ENCODE measurements at regions of chr5 and their contacts with region 1.

Region 1: GRCh38 chr5:43040287-43041098 is at the start of gene ANXA2R:
- DNase-seq: peak; percentile 78
- ATAC-seq: peak; percentile 62
- H3K4me3 Mint-ChIP-seq: peak within 1 kb of the TSS; percentile 96
- H3K27ac Mint-ChIP-seq: peak within 1 kb of the TSS; percentile 98
- H3K4me1 Mint-ChIP-seq: peaks cover 53% of the 10 kb centered on the region
- H3K27me3 Mint-ChIP-seq: no peaks in the 10 kb centered on the region
- CTCF ChIP-seq: peak; percentile 39
- total RNA-seq, gene ANXA2R: 6.7 and 7.9 TPM in 2 replicates

Region 2: GRCh38 chr5:42908509-42909488 is 131.7 kb before region 1 on chr5:
- CTCF ChIA-PET with region 1: interaction called, 30 read pairs
- POLR2A ChIA-PET with region 1: interaction called, 30 read pairs
- intact Hi-C with region 1: loop called (anchors 1 kb)
- DNase-seq: peak; percentile 71
- ATAC-seq: peak; percentile 94
- H3K4me3 Mint-ChIP-seq: peak overlapping the region; percentile 93
- H3K27ac Mint-ChIP-seq: peak overlapping the region; percentile 84
- H3K4me1 Mint-ChIP-seq: peaks cover 12% of the 10 kb centered on the region
- H3K27me3 Mint-ChIP-seq: peaks cover 11% of the 10 kb centered on the region
- CTCF ChIP-seq: peak; percentile 50

Region 3: GRCh38 chr5:42994246-42995151 is 46.0 kb before region 1 on chr5:
- CTCF ChIA-PET with region 1: interaction called, 81 read pairs
- POLR2A ChIA-PET with region 1: interaction called, 372 read pairs
- intact Hi-C with region 1: loop called (anchors 1 kb)
- DNase-seq: peak; percentile 72
- ATAC-seq: peak; percentile 66
- H3K4me3 Mint-ChIP-seq: peak overlapping the region; percentile 99
- H3K27ac Mint-ChIP-seq: peak overlapping the region; percentile 100
- H3K4me1 Mint-ChIP-seq: peaks cover 34% of the 10 kb centered on the region
- H3K27me3 Mint-ChIP-seq: peaks cover under 1% of the 10 kb centered on the region
- CTCF ChIP-seq: peak; percentile 89

Region 4: GRCh38 chr5:43019614-43020293 is 20.7 kb before region 1 on chr5:
- CTCF ChIA-PET with region 1: interaction called, 89 read pairs
- POLR2A ChIA-PET with region 1: interaction called, 475 read pairs
- intact Hi-C with region 1: loop called (anchors 1 kb)
- DNase-seq: peak; percentile 61
- ATAC-seq: peak; percentile 64
- H3K4me3 Mint-ChIP-seq: peak overlapping the region; percentile 97
- H3K27ac Mint-ChIP-seq: peak overlapping the region; percentile 100
- H3K4me1 Mint-ChIP-seq: peaks cover 39% of the 10 kb centered on the region
- H3K27me3 Mint-ChIP-seq: no peaks in the 10 kb centered on the region
- CTCF ChIP-seq: no peak

Region 5: DNA sequence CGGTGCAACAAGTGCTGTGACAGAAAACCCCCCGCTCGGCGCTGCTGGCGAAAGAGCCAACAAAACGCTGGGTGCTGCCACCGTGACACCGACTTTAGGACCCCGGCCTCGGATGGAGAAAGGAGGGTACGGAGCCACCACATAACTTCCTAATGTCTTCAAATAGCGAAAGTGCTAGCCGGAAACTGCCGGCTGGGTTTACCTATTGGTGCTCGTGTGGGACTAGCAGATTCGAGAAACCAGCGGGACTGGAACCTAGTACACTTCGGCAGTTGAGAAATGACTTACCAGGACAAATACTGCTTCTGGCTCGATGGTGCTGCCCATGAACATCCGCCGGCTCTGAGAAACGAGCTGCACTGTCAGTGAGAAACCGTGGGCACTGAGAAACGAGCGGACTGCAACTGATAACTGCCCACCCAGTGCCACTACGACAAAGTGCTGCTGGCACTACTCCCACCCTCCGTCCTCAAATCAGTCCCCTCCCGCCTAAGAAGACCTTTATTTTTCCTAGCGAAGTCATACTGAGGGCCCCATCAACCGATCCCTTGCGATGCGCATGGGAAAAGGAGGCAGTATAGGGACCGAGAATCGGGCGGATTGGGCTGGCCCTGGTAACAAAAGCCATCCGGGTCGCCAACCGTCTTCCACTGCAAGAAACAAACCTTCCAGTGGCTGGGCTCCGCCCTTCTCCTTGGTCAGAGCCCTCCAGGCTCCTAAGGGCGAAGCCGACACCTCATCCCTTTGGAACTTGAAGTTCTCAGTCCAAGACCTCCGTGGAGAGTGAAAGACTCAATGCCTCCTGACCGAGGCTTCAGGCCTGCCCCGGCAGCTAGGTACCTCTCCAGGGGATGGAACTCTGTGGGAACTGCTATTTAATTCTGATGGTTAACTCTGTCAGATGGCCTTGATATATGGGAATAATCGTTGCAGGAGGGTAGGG is 26.6 kb after region 1 on chr5:
- CTCF ChIA-PET with region 1: interaction called, 44 read pairs
- POLR2A ChIA-PET with region 1: interaction called, 207 read pairs
- intact Hi-C with region 1: loop called (anchors 1 kb)
- DNase-seq: peak; percentile 83
- ATAC-seq: peak; percentile 55
- H3K4me3 Mint-ChIP-seq: peak overlapping the region; percentile 95
- H3K27ac Mint-ChIP-seq: peak overlapping the region; percentile 99
- H3K4me1 Mint-ChIP-seq: peaks cover 40% of the 10 kb centered on the region
- H3K27me3 Mint-ChIP-seq: no peaks in the 10 kb centered on the region
- CTCF ChIP-seq: no peak

Region 6: DNA sequence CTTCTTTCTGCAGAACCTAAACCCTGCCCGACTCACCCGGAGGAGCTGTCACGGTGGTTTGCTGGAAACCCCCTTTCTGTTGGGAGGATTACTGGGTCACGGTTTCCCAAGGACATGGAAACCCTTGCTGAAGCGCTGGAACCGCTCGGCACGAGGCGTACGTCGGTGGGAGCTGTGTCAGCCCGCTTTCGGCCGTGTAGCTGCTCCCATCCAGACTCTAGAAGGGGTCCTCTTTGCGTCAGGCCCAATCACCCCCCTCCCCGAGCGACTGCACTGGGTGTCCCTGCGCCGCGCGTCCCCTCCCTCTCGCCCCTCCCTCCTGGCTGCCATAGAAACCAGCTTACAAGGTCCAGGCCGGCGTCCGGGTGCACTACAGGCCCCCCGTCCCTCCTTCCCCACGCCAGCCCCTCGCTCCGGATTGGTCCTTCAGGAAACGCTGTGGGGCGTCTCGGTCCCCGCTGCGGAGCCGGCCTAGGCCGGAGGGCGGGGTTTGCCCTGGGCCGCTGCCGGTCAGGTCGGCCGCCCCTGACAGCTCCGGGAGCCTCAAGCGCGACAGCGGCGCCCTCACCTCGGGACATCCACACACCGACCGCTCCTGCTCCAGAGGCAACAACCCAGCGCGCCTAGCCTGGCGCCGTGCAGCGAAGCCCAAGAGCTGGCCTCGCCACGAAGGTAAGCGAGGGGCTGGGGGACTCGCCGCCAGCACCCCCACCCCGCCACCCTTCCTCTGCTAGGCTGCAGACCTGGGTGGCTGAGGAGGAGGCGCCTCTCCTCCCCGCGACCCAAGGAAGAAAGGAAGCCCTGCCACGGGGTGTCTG is 151.5 kb after region 1 on chr5 and contains the start of gene NIM1K:
- CTCF ChIA-PET with region 1: no interaction called
- POLR2A ChIA-PET with region 1: no interaction called
- intact Hi-C with region 1: loop called (anchors 2 kb)
- DNase-seq: peak; percentile 45
- ATAC-seq: peak; percentile 65
- H3K4me3 Mint-ChIP-seq: peak within 1 kb of the TSS; percentile 84
- H3K27ac Mint-ChIP-seq: no peak within 1 kb of the TSS
- H3K4me1 Mint-ChIP-seq: peaks cover 28% of the 10 kb centered on the region
- H3K27me3 Mint-ChIP-seq: peaks cover 19% of the 10 kb centered on the region
- CTCF ChIP-seq: no peak
- total RNA-seq, gene NIM1K: 0.39 and 0.51 TPM in 2 replicates

Region 7: GRCh38 chr5:44035617-44036016 is 995.1 kb after region 1 on chr5:
- CTCF ChIA-PET with region 1: no interaction called
- POLR2A ChIA-PET with region 1: no interaction called
- intact Hi-C with region 1: no loop called
- DNase-seq: no peak
- ATAC-seq: no peak
- H3K4me3 Mint-ChIP-seq: no peak overlapping the region
- H3K27ac Mint-ChIP-seq: no peak overlapping the region
- H3K4me1 Mint-ChIP-seq: no peaks in the 10 kb centered on the region
- H3K27me3 Mint-ChIP-seq: no peaks in the 10 kb centered on the region
- CTCF ChIP-seq: no peak